ENCODE measurements at regions of chr4 and their contacts with region 1.

Region 1: GRCh38 chr4:153634738-153635353 is 49.2 kb upstream of the TLR2 start:
- DNase-seq: no peak
- ATAC-seq: peak in 3 of 4 donors; percentile 35 to 75 (median 71)
- H3K4me3 ChIP-seq: no peak overlapping the region
- H3K27ac ChIP-seq: no peak overlapping the region
- H3K4me1 ChIP-seq: no peaks in the 10 kb centered on the region
- H3K27me3 ChIP-seq: no peaks in the 10 kb centered on the region
- CTCF ChIP-seq: peak in 3 of 4 donors; percentile 19 to 32 (median 26)

Region 2: GRCh38 chr4:153448003-153448731 is 186.7 kb before region 1 on chr4:
- intact Hi-C with region 1: no loop called
- DNase-seq: no peak
- ATAC-seq: no peak
- H3K4me3 ChIP-seq: no peak overlapping the region
- H3K27ac ChIP-seq: no peak overlapping the region
- H3K4me1 ChIP-seq: peaks cover 3 to 11% (median 5%) of the 10 kb centered on the region in 3 donors
- H3K27me3 ChIP-seq: no peaks in the 10 kb centered on the region
- CTCF ChIP-seq: no peak

Region 3: GRCh38 chr4:153750197-153750817 is 115.5 kb after region 1 on chr4:
- intact Hi-C with region 1: loop called in 1 of 3 experiments (anchors 10 kb)
- DNase-seq: peak in 4 of 6 donors; percentile 27 to 64 (median 45)
- ATAC-seq: peak; percentile 55 to 95 (median 88)
- H3K4me3 ChIP-seq: no peak overlapping the region
- H3K27ac ChIP-seq: no peak overlapping the region
- H3K4me1 ChIP-seq: no peaks in the 10 kb centered on the region
- H3K27me3 ChIP-seq: no peaks in the 10 kb centered on the region
- CTCF ChIP-seq: peak in 3 of 4 donors; percentile 35 to 59 (median 54)